H1 (cell line): ENCODE measurements at regions of chr22 and their contacts with region 1.

Region 1: DNA sequence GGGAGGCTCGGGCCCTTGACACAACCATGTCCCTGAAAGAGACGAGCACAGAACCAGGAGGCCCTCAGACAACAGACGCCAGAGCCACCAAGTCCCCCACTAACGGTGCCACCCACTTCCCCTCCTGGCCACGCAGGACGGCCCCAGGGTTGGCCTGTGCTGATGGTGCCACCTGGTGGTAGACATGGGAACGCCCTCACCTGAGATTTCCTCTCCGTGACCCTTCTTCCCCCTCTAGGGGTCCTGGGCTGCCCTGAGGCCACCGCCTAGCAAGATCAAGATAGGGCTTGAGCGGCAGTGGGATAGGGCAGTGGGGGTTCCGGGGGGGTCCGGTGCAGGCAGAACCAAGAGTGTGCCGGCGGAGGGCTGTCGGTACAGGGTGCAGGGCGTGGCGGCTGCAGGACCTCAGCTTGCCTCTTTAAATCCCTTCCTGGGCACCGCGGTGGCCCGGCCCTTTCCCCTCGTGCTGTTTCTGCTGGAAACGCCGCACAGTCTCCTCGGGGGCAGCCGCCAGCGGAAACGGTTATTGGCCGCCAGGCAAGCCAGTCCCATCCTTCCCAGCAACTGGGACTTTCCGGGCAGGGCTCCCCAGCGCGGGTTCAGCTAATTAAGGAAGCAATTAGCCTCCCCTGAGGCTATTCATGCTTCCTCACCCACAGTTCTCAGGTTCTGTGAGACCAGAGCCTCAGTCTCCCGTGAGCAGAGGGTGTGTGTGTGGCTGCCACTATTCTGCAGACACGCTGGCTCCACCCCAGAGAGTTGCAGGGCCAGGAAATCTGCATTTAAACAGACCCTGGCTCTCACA is 5.5 kb upstream of the NFAM1 start:
- DNase-seq: peak in 1 of 2 experiments; percentile 92
- H3K4me3 ChIP-seq: peak overlapping the region; percentile 62 to 80 (median 72)
- H3K27ac ChIP-seq: no peak overlapping the region
- H3K4me1 ChIP-seq: peaks cover 6 to 29% (median 17%) of the 10 kb centered on the region in 4 experiments
- H3K27me3 ChIP-seq: peaks cover 0 to 3% (median 2%) of the 10 kb centered on the region in 4 experiments; a peak in 3 of 7 replicates
- CTCF ChIP-seq: peak; percentile 96 to 98 (median 96)
- EP300 ChIP-seq: no peak
- POLR2A ChIP-seq: no peak
- RAD21 ChIP-seq: peak; percentile 96 to 98

Region 2: DNA sequence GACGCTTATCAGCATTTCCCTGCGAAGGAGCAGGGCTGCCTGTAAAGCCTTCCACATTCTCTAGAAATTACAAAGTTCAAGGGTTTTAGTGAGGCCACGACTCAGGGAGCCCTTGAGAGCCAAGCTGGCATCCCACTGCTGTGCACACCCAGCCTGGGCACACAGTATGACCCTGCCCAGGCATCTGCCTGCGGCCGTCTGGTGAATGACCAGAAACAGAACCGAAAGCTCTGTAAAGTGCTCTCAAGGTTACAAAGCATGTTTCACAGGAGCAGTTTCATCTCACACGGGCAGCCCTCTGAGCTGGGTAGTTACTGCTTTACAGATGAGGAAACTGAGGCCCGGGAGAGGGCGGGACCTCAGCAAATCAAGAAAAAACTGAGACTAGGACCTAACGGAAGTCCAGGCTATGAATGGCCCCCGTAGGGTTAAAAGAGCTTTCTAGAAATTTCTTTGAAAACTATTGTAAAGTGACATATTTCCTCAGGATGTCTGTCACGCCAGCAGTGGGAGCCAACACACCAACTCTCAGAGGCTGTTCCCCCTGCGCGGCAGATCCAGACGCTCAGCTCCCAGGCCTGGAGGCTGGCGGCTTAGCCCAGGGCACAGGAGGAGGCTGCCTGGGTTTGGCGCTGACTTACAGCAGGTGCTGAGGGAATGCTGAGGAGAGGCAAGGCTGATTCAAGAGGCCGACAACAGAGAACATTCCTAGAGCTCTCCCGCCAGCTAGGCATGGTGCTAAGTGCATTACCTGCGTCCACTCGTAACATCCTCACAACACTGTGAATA is 159.5 kb before region 1 on chr22:
- CTCF ChIA-PET with region 1: interaction called, 12 read pairs
- POLR2A ChIA-PET with region 1: interaction called, 3 read pairs
- DNase-seq: no peak
- H3K4me3 ChIP-seq: no peak overlapping the region
- H3K27ac ChIP-seq: no peak overlapping the region
- H3K4me1 ChIP-seq: peaks cover 29 to 43% (median 30%) of the 10 kb centered on the region in 4 experiments
- H3K27me3 ChIP-seq: peaks cover 0 to 43% (median 27%) of the 10 kb centered on the region in 4 experiments; a peak in 5 of 7 replicates
- CTCF ChIP-seq: peak in 2 of 3 experiments; percentile 18 to 25; a peak in 2 of 4 replicates
- EP300 ChIP-seq: no peak
- POLR2A ChIP-seq: no peak
- RAD21 ChIP-seq: peak; percentile 58 to 67

Region 3: GRCh38 chr22:42283278-42284201 is 154.2 kb before region 1 on chr22:
- CTCF ChIA-PET with region 1: interaction called, 12 read pairs
- POLR2A ChIA-PET with region 1: interaction called, 3 read pairs
- DNase-seq: peak in 1 of 2 experiments; percentile 71
- H3K4me3 ChIP-seq: peak overlapping the region; percentile 4 to 56 (median 38)
- H3K27ac ChIP-seq: no peak overlapping the region
- H3K4me1 ChIP-seq: peaks cover 0 to 17% (median 11%) of the 10 kb centered on the region in 4 experiments; a peak in 6 of 7 replicates
- H3K27me3 ChIP-seq: peaks cover 0 to 55% (median 39%) of the 10 kb centered on the region in 4 experiments; a peak in 6 of 7 replicates
- CTCF ChIP-seq: no peak
- EP300 ChIP-seq: no peak
- POLR2A ChIP-seq: no peak
- RAD21 ChIP-seq: no peak

Region 4: DNA sequence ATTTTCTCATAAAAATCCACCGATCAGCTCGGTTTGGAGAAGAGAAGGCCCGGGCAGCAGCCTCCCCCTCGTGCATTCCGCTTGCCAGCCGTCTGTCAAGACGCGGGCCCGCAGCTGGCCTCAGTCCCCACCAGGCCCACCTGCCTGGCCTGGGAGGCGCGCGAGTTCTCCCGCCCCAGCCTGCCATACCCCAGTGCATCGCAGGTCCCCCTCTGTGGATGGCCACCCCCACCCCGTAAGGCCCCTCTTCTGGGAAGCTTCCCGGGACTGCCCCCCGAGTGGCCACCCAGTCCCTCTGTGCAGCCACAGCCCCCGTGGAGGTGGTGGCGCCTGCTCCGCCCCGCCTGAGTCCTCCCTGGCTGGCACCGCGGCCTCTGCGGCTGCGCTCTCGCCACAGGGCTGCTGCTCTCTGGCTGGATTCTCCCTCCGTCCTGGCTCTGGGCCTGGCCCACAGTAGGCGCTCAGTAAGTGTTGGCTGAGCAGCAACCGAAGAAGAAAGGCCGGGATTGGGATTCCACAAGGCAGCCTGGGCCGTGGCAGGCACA is 93.3 kb before region 1 on chr22:
- CTCF ChIA-PET with region 1: interaction called, 20 read pairs
- POLR2A ChIA-PET with region 1: interaction called, 3 read pairs
- DNase-seq: peak in 1 of 2 experiments; percentile 74
- H3K4me3 ChIP-seq: peak overlapping the region in 3 of 4 experiments; percentile 7 to 55 (median 45); a peak in 3 of 8 replicates
- H3K27ac ChIP-seq: no peak overlapping the region
- H3K4me1 ChIP-seq: peaks cover 0 to 29% (median 17%) of the 10 kb centered on the region in 4 experiments; a peak in 6 of 7 replicates
- H3K27me3 ChIP-seq: peaks cover 0 to 29% (median 18%) of the 10 kb centered on the region in 4 experiments; a peak in 5 of 7 replicates
- CTCF ChIP-seq: no peak
- EP300 ChIP-seq: no peak
- POLR2A ChIP-seq: no peak
- RAD21 ChIP-seq: peak in 1 of 2 experiments; percentile 10; a peak in 1 of 4 replicates

Region 5: DNA sequence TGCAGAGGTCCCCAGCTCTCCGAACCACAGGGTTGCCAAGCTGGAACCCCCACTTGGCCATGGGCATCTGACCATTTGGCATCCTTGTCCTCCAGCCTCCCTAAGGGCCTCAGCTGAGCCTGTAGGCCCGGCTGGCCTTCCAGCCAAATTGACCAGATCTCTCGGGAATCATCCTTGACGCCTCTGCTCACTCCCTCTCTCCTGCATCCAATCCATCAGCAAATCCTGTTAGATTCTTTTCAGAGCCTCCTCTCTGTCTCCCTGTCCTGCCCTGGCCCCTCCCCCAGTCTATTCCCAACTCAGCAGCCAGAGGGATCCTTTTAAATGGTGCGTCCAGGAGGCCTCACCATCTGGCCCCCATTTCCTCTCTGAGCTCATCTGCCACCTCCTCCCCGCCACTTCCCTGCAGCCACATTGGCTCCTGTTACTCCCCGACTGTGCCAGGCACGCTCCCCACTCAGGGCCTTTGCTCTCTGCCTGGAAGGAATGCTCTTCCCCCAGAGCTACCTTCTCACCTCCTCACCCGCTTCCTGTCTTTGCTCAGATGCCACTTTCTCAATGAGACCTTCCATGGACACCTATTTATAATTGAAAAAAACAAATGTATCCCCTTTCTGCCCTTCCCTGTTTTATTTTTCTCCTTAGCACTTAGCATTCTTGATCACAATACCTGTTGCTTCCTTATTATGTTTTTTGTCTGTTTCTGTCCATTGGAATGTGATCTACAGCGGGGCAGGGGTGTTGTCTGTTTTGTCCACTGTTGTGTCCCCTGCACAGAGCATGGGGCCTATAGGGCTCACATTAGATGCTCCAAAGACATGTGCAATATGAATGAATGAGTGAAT is 83.6 kb before region 1 on chr22:
- CTCF ChIA-PET with region 1: interaction called, 25 read pairs
- POLR2A ChIA-PET with region 1: no interaction called
- DNase-seq: no peak
- H3K4me3 ChIP-seq: no peak overlapping the region
- H3K27ac ChIP-seq: no peak overlapping the region
- H3K4me1 ChIP-seq: peaks cover 3 to 14% (median 9%) of the 10 kb centered on the region in 4 experiments
- H3K27me3 ChIP-seq: no peaks in the 10 kb centered on the region; a peak in 2 of 7 replicates
- CTCF ChIP-seq: peak in 2 of 3 experiments; percentile 19 to 30; a peak in 3 of 4 replicates
- EP300 ChIP-seq: 0 out of 3 replicates have a peak, but pooled peaks of 1 of the 2 experiments have one; percentile 24
- POLR2A ChIP-seq: no peak
- RAD21 ChIP-seq: peak in 1 of 2 experiments; percentile 34; a peak in 2 of 4 replicates

Region 6: DNA sequence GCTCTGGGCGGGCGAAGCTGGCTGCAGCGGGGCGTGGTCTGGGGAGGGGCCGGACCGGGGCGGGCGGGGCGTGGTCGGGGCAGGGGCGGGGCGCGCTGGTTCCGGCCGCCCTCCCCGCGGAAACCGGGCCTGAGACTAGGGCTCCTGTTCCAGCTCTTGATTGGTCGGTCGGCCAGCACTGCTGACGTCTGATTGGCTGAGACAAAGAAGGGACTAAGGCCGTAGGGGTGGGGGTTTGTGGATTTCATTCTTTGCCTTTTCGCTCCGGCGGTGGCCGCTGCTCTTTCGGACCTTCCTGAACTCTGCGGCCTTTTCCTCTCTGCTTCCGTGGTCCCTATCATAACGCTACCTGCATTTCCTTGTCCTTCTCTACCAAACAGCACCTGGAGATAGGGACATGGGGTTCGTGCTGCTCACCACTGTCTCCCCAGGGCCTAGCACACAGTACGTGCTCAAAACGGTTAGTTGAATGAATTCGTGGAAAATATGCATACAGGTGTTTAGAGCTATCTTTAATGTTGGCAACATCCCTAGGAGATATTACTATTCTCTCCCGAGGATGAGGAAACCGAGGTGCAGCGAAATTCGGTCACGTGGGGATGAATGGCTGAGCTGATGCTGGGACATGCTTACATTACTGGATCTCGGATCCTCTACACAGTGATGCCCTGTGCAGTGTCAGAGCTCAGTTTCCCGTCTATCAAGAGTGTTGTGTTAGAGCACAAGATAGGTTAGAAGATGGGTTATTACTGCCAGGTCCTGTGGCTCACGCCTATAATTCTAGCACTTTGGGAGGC is 68.2 kb before region 1 on chr22:
- CTCF ChIA-PET with region 1: interaction called, 10 read pairs
- POLR2A ChIA-PET with region 1: interaction called, 7 read pairs
- DNase-seq: peak in 1 of 2 experiments; percentile 78
- H3K4me3 ChIP-seq: peak overlapping the region; percentile 75 to 97 (median 83)
- H3K27ac ChIP-seq: no peak overlapping the region
- H3K4me1 ChIP-seq: peaks cover 18 to 47% (median 28%) of the 10 kb centered on the region in 4 experiments
- H3K27me3 ChIP-seq: peaks cover 0 to 2% (median 0%) of the 10 kb centered on the region in 4 experiments; a peak in 2 of 7 replicates
- CTCF ChIP-seq: no peak
- EP300 ChIP-seq: peak in 1 of 2 experiments; percentile 42; a peak in 1 of 3 replicates
- POLR2A ChIP-seq: 0 out of 3 replicates have a peak, but pooled peaks of 1 of the 2 experiments have one; percentile 59
- RAD21 ChIP-seq: no peak

Region 7: GRCh38 chr22:42419243-42419881 is 18.3 kb before region 1 on chr22:
- CTCF ChIA-PET with region 1: interaction called, 46 read pairs
- POLR2A ChIA-PET with region 1: interaction called, 5 read pairs
- DNase-seq: no peak
- H3K4me3 ChIP-seq: no peak overlapping the region
- H3K27ac ChIP-seq: no peak overlapping the region
- H3K4me1 ChIP-seq: peaks cover 0 to 6% (median under 1%) of the 10 kb centered on the region in 4 experiments; a peak in 4 of 7 replicates
- H3K27me3 ChIP-seq: no peaks in the 10 kb centered on the region
- CTCF ChIP-seq: no peak
- EP300 ChIP-seq: no peak
- POLR2A ChIP-seq: no peak
- RAD21 ChIP-seq: no peak

Region 8: DNA sequence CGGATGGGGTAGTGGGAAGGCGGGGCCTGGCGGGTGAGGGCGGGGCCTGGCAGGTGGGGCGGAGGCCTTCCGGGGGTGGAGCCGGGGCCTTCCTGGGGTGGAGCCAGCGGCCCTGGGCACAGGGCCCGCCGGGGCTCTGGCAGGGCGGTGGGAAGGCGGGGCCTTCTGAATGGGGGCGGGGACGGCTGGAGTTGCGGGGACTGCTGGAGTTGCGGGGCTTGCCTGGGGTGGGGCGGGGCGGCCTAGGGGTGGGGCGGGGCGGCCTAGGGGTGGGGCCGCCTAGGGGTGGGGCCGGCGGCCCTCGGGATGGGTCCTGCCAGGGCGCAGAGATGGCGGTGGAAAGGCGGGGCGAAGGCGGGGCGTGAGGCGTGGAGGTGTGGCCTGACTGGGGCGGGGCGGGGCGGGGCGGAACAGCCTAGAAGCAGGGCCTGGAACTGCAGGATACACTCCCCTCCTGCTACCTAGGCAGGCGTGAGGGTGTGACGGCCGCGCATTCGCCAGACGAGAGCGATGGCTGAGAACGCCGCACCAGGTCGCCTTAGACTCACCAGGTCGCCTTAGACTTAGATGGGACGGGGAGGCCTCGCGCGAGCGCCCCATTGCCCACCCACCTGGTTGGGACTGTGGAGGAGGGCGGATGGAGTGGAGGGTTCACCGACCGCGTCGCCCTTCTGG is 62.6 kb after region 1 on chr22:
- CTCF ChIA-PET with region 1: no interaction called
- POLR2A ChIA-PET with region 1: no interaction called
- DNase-seq: peak; percentile 73 to 98
- H3K4me3 ChIP-seq: peak overlapping the region; percentile 24 to 55 (median 40)
- H3K27ac ChIP-seq: no peak overlapping the region
- H3K4me1 ChIP-seq: peaks cover 3 to 14% (median 9%) of the 10 kb centered on the region in 4 experiments; a peak in 6 of 7 replicates
- H3K27me3 ChIP-seq: no peaks in the 10 kb centered on the region
- CTCF ChIP-seq: no peak
- EP300 ChIP-seq: no peak
- POLR2A ChIP-seq: peak in 1 of 2 experiments; percentile 39; a peak in 1 of 3 replicates
- RAD21 ChIP-seq: no peak